ENCODE measurements at regions of chr1 and their contacts with region 1.

Region 1: DNA sequence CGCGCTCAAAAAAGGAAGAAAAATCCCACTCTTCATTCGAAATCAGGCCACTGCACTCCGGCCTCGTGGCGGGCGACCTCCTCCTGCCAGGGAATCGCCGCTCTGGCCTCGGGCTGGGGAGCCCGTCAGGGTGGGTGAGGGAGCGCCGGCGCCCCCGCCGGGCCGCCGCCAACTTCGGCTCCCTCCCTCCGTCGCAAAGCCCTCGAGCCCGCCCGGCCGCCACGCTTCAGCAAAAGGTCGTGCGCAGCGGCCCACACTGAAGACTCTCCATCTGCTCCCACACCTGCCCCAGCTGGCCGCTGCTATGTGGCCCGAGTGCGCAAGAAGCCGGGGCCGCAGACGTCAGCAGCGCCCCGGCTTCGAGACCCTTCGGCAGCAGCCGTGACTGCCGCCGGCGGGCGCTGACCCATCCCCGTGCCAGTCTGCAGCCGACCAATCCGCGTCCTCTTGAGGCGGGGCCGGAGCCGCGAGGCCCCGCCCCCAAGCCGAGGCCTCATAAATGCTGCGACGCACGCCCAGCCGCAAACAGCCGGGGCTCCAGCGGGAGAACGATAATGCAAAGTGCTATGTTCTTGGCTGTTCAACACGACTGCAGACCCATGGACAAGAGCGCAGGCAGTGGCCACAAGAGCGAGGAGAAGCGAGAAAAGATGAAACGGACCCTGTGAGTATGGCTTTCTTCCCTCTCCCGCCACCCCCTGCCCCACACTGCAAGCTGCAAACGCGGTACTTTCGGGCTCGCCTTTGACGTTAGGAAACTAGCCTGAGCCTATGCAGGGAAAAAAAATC is at the start of gene RGS2:
- DNase-seq: peak; percentile 49
- H3K4me3 ChIP-seq: peak within 1 kb of the TSS; percentile 93
- CTCF ChIP-seq: no peak

Region 2: DNA sequence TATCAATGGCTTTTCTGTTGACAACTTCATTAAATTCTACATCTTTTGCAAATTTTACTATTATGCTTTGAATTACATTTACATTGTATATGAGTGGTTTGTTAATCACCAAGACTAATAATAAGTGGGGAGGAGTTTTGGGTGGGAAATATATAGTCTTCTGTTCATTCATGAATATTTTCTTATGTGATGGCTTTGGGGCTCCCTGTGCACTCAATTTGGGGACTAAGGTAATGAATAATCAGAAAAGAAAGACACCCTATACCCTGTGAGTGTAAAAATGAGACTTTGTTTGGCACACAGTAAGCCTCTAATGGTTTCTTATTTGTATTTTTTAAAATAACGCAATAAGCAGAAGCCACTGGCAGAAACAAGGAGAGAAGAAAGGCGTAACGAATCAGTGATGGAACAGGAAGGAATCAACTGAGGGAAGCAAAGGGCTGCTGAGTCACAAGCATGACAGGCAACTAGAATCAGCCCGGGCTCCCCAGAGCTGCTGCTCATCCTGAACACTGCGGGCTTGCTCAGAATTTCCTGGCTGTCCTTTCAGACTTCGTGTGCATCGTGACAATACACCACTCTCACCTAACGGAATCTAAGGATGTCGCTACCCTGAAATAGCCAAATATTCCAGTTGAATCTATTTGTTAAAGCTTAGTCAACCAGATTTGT is 20.7 kb before region 1 on chr1:
- CTCF ChIA-PET with region 1: interaction called, 14 read pairs
- POLR2A ChIA-PET with region 1: interaction called, 4 read pairs
- DNase-seq: peak; percentile 45
- H3K4me3 ChIP-seq: no peak overlapping the region
- CTCF ChIP-seq: no peak

Region 3: GRCh38 chr1:192793983-192794767 is 14.5 kb before region 1 on chr1:
- CTCF ChIA-PET with region 1: interaction called, 24 read pairs
- POLR2A ChIA-PET with region 1: interaction called, 4 read pairs
- DNase-seq: no peak
- H3K4me3 ChIP-seq: no peak overlapping the region
- CTCF ChIP-seq: no peak

Region 4: DNA sequence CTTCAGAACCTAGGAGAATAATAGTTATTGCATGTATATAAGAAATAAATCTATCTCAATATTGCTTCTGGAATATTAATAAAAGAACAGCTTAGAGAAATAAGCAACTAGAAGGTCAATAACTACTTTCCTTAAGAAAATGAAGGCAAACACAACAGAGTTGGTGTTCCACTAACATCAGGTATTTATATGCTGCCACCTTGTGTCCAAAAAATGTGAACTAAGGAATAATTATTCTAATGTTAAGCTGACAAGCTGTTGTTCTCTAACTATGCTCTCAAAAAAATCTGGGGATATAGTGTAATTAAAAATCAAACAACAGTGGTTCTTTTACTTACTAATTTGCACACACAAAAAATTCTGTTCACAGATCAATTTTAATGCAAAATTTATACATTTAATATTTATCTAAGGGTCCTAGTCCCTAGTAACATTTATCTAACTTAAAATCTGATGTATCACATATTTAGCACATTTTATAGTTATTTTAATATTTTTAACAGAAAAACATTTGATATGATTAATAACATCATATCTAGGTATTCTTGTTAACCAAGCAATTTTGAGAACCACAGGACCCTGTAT is 210.8 kb after region 1 on chr1:
- CTCF ChIA-PET with region 1: interaction called, 231 read pairs
- POLR2A ChIA-PET with region 1: interaction called, 10 read pairs
- DNase-seq: no peak
- H3K4me3 ChIP-seq: no peak overlapping the region
- CTCF ChIP-seq: peak; percentile 25

Region 5: DNA sequence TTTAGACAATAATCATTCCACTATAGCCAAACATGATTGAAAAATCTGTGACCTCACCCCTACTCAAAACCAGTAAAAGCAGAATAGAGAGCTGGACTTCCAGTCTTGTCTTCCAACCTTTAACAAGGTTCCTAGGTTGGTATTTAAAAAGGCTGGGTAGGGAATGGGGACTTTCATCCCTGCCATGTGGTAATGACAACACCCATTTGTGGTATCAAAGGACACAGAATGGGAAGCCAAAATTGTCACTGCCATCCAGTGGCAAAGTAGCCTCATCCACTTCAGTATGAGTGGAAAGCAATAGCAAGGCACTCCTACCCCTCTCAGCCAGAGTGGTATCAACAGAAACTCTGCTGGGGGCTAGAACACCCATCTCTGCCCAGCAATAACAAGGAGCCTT is 216.5 kb after region 1 on chr1:
- CTCF ChIA-PET with region 1: interaction called, 231 read pairs
- POLR2A ChIA-PET with region 1: no interaction called
- DNase-seq: no peak
- H3K4me3 ChIP-seq: no peak overlapping the region
- CTCF ChIP-seq: no peak

Region 6: DNA sequence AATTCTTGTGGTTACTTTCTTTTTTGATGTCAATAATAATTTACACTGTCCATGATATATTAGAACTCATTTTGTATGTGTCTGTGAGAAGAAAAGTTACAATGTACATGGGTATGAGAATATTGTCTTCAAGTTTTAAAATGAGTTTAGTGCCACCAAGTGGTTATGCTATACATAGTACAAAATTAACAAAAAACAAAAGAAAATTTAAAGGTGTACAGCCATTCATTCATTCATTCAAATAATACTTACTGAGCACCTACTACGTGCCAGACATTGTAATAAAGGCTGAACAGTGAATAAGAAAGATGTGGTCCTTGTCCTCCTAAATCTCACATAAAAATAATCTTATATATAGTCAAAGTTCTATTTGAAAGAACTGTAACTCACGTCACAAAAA is 222.7 kb after region 1 on chr1:
- CTCF ChIA-PET with region 1: interaction called, 38 read pairs
- POLR2A ChIA-PET with region 1: no interaction called
- DNase-seq: no peak
- H3K4me3 ChIP-seq: no peak overlapping the region
- CTCF ChIP-seq: no peak

Region 7: GRCh38 chr1:193121616-193122593 is 313.2 kb after region 1 on chr1 and contains the start of gene CDC73:
- CTCF ChIA-PET with region 1: no interaction called
- POLR2A ChIA-PET with region 1: no interaction called
- DNase-seq: peak; percentile 82
- H3K4me3 ChIP-seq: peak within 1 kb of the TSS; percentile 89
- CTCF ChIP-seq: peak; percentile 98